A549 (cell line): ENCODE measurements at regions of chr19 and their contacts with region 1.

Region 1: GRCh38 chr19:42563352-42564210 is 31.1 kb downstream of the CEACAM8 start:
- DNase-seq: peak; percentile 76 to 95
- ATAC-seq: peak; percentile 79 to 91
- H3K4me3 ChIP-seq: no peak overlapping the region
- H3K27ac ChIP-seq: no peak overlapping the region
- H3K4me1 ChIP-seq: no peaks in the 10 kb centered on the region
- CTCF ChIP-seq: peak; percentile 81
- EP300 ChIP-seq: no peak
- POLR2A ChIP-seq: no peak
- RAD21 ChIP-seq: peak; percentile 77 to 78

Region 2: GRCh38 chr19:42412227-42412626 is 151.4 kb before region 1 on chr19:
- CTCF ChIA-PET with region 1: no interaction called
- POLR2A ChIA-PET with region 1: no interaction called
- DNase-seq: no peak
- ATAC-seq: peak; percentile 12; a peak in 4 of 6 replicates
- H3K4me3 ChIP-seq: no peak overlapping the region
- H3K27ac ChIP-seq: no peak overlapping the region
- H3K4me1 ChIP-seq: no peaks in the 10 kb centered on the region
- CTCF ChIP-seq: no peak
- EP300 ChIP-seq: no peak
- POLR2A ChIP-seq: no peak
- RAD21 ChIP-seq: no peak

Region 3: GRCh38 chr19:42455621-42456081 is 107.9 kb before region 1 on chr19:
- CTCF ChIA-PET with region 1: interaction called, 82 read pairs
- POLR2A ChIA-PET with region 1: no interaction called
- DNase-seq: peak; percentile 70 to 83
- ATAC-seq: peak; percentile 83 to 87
- H3K4me3 ChIP-seq: no peak overlapping the region
- H3K27ac ChIP-seq: no peak overlapping the region; a peak in 1 of 6 replicates
- H3K4me1 ChIP-seq: peaks cover 12% of the 10 kb centered on the region
- CTCF ChIP-seq: no peak
- EP300 ChIP-seq: no peak
- POLR2A ChIP-seq: no peak
- RAD21 ChIP-seq: no peak; a peak in 1 of 5 replicates

Region 4: DNA sequence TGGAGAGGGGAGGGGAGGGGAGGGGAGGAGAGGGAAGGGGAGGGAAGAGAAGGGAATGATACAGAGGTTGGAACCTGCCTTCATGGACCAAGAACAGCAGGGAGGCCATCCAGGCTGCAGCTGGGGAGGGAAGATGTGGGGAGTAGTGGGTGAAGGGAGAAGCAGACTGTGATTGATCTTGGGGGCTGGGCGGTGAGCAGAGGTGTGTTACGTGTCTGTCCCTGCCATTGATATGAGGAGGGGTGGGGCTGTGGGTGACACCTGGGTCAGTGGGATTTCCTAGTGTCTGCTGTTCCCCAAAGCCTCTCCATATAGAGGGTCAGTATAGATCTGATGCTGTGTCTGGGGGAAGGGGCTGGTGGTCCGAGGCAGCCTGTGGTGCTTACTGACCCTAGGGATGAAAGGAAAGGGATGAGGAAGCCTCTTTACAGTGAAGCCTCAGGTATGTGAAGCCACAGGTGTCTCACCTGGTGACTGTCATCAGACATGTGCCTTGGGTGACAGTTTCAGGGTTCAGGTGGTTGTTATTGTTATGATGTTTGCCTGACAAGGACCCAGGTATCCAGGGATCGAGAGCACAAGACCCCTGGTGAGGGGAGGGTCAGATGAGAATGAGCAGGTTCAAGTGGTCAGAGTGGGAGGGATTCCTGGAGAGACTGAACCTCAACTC is 16.6 kb before region 1 on chr19:
- CTCF ChIA-PET with region 1: interaction called, 104 read pairs
- POLR2A ChIA-PET with region 1: no interaction called
- DNase-seq: no peak
- ATAC-seq: no peak
- H3K4me3 ChIP-seq: no peak overlapping the region
- H3K27ac ChIP-seq: no peak overlapping the region
- H3K4me1 ChIP-seq: no peaks in the 10 kb centered on the region
- CTCF ChIP-seq: no peak
- EP300 ChIP-seq: no peak
- POLR2A ChIP-seq: no peak
- RAD21 ChIP-seq: no peak

Region 5: DNA sequence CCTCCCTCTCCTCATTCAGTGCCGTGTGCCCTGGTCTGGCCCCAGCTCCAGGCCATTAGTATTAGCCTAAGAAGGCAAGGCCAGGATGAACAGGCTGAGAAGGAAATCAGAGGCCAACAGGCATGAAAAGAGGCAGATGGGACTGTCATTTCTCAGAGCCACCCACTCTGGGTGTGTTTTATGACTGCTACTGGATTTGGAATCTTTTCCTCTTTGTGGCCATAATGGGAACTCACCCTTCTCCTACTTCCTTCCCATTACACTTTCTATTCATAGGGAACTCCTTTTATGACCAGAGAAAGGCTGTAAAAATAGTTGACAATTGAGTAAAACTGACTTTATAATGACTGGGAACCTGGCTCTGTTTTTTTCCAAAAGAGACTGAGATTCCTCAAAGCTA is 13.4 kb after region 1 on chr19:
- CTCF ChIA-PET with region 1: interaction called, 35 read pairs
- POLR2A ChIA-PET with region 1: no interaction called
- DNase-seq: no peak
- ATAC-seq: no peak; a peak in 1 of 6 replicates
- H3K4me3 ChIP-seq: no peak overlapping the region
- H3K27ac ChIP-seq: no peak overlapping the region
- H3K4me1 ChIP-seq: no peaks in the 10 kb centered on the region
- CTCF ChIP-seq: no peak
- EP300 ChIP-seq: no peak
- POLR2A ChIP-seq: no peak
- RAD21 ChIP-seq: no peak

Region 6: GRCh38 chr19:42606660-42607351 is 43.2 kb after region 1 on chr19:
- CTCF ChIA-PET with region 1: interaction called, 30 read pairs
- POLR2A ChIA-PET with region 1: no interaction called
- DNase-seq: peak; percentile 80 to 88
- ATAC-seq: peak; percentile 75 to 98
- H3K4me3 ChIP-seq: no peak overlapping the region
- H3K27ac ChIP-seq: no peak overlapping the region
- H3K4me1 ChIP-seq: no peaks in the 10 kb centered on the region
- CTCF ChIP-seq: peak; percentile 87
- EP300 ChIP-seq: no peak
- POLR2A ChIP-seq: peak; percentile 22; the same call in 1 of the 2 replicates
- RAD21 ChIP-seq: peak; percentile 75 to 86